ENCODE measurements at regions of chr3 and their contacts with region 1.

Region 1: GRCh38 chr3:32238453-32239306 is at the start of gene CMTM8:
- DNase-seq: peak; percentile 37 to 70
- H3K4me3 ChIP-seq: peak within 1 kb of the TSS; percentile 72
- H3K27ac ChIP-seq: no peak within 1 kb of the TSS
- H3K4me1 ChIP-seq: peaks cover 17% of the 10 kb centered on the region; the same call in 1 of the 2 replicates
- H3K27me3 ChIP-seq: no peaks in the 10 kb centered on the region
- CTCF ChIP-seq: no peak
- total RNA-seq, gene CMTM8: 16.8 and 17.8 TPM in 2 replicates

Region 2: DNA sequence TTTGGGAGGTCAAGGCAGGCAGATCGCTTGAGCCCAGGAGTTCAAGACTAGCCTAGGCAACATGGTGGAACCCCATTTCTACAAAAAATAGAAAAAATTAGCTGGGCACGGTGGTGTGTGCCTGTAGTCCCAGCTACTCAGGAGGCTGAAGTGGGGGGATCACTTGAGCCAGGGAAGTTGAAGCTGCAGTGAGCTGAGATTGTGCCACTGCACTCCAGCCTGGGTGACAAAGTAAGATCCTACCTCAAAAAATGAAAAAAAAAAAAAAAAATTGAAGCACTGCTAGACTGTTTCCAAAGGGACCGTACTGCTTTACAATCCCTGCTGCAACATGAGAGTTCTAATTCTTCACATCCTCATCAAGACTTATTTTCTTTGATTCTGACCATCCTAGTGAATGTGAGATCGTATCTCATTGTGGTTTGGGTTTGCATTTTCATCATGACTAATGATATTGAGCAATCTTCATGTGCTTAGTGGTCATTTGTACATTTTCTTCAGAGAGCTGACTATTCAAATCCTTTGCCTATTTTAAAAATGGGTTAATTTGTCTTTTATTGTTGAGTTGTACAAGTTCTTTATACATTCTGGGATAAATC is 10.6 kb after region 1 on chr3:
- CTCF ChIA-PET with region 1: no interaction called
- POLR2A ChIA-PET with region 1: no interaction called
- intact Hi-C with region 1: loop called (anchors 1 kb)
- DNase-seq: peak; percentile 17 to 88
- H3K4me3 ChIP-seq: no peak overlapping the region
- H3K27ac ChIP-seq: peak overlapping the region; percentile 84
- H3K4me1 ChIP-seq: peaks cover 30% of the 10 kb centered on the region
- H3K27me3 ChIP-seq: no peaks in the 10 kb centered on the region
- CTCF ChIP-seq: no peak

Region 3: GRCh38 chr3:32283304-32283703 is 44.6 kb after region 1 on chr3:
- CTCF ChIA-PET with region 1: interaction called, 12 read pairs
- POLR2A ChIA-PET with region 1: no interaction called
- intact Hi-C with region 1: no loop called
- DNase-seq: no peak
- H3K4me3 ChIP-seq: no peak overlapping the region
- H3K27ac ChIP-seq: no peak overlapping the region
- H3K4me1 ChIP-seq: peaks cover 14% of the 10 kb centered on the region
- H3K27me3 ChIP-seq: no peaks in the 10 kb centered on the region
- CTCF ChIP-seq: no peak

Region 4: DNA sequence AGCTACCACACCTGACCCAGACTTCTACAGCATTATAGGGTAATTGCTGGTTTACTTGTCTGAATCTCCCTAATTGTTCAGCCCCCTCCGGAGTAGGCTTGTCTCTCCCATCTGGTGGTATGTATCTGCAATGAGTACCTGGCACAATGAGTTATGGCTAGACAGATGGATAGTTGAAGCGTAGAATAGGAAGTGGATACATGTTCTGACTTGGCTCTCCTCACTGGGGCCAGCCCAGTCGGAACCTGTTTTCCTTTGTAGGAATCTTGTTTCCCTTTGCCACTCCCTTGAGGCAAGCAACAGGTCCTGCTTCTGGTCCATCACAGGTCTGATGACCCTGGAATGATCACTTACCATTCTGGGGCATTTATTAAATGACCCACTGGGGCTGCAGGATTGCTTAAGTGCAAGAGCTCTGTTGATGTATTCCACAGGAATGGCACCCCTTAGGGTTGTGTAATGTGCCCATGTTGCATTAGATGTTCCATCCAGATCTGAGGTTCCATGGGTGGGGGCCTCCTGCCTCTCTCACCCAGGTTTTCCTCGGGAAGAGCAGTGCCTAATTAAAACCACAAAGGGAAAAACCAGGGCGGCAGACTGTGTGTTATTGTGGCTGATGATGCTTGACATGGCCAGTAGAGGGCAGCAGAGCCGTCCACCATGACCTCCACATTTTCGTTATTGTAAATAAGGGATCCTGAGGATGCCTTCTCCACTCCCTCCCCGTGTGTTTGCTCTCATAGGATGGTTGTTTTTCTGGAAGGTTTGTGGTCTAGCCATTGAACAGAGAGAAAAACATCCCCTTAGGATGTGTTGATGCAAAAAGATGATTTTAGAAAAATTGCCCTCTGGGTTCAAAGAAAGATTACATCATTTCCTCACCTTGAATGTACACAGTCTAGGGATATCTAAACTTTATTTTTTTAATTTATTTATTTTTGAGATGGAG is 57.9 kb after region 1 on chr3:
- CTCF ChIA-PET with region 1: interaction called, 5 read pairs
- POLR2A ChIA-PET with region 1: no interaction called
- intact Hi-C with region 1: loop called (anchors 5 kb)
- DNase-seq: peak in 1 of 2 experiments; percentile 51
- H3K4me3 ChIP-seq: no peak overlapping the region
- H3K27ac ChIP-seq: no peak overlapping the region
- H3K4me1 ChIP-seq: peaks cover 33% of the 10 kb centered on the region
- H3K27me3 ChIP-seq: no peaks in the 10 kb centered on the region
- CTCF ChIP-seq: peak; percentile 80

Region 5: GRCh38 chr3:32438596-32439344 is 200.1 kb after region 1 on chr3:
- CTCF ChIA-PET with region 1: no interaction called
- POLR2A ChIA-PET with region 1: no interaction called
- intact Hi-C with region 1: no loop called
- DNase-seq: no peak
- H3K4me3 ChIP-seq: no peak overlapping the region
- H3K27ac ChIP-seq: no peak overlapping the region
- H3K4me1 ChIP-seq: peaks cover 12% of the 10 kb centered on the region
- H3K27me3 ChIP-seq: no peaks in the 10 kb centered on the region
- CTCF ChIP-seq: no peak

Region 6: GRCh38 chr3:33001889-33002288 is 763.2 kb after region 1 on chr3:
- CTCF ChIA-PET with region 1: no interaction called
- POLR2A ChIA-PET with region 1: no interaction called
- intact Hi-C with region 1: no loop called
- DNase-seq: no peak
- H3K4me3 ChIP-seq: no peak overlapping the region
- H3K27ac ChIP-seq: no peak overlapping the region
- H3K4me1 ChIP-seq: no peaks in the 10 kb centered on the region
- H3K27me3 ChIP-seq: no peaks in the 10 kb centered on the region
- CTCF ChIP-seq: no peak

Measured in PC-9 (cell line).